K562 (cell line): ENCODE measurements at regions of chr1 and their contacts with region 1.

Region 1: DNA sequence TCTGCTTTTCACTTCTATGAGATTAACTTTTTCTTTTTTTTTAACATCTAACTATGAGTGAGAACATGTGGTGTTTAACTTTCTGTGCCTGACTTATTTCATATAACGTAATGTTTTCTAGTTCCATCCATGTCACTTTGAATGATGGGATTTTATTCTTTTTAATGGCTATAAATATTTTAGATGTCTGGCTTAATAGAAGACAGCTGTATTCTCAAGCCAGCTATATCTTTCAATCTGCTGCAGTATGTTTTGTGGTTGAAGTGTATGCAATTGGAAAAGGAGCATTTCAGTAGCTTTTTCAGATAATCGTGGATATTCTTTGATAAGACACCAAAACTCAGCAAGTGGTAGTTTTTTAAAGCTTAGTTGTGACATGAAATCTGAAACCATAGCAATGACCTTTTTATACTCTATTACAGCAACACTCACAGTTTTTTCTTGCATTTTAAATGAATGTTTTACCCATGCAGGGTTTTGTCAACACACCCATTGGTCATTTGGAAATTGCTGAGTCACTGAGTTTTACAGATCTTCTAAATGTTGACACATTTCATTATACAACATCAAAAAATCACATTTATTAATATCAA is 5.7 kb upstream of the SVBP start:
- DNase-seq: peak in 2 of 4 experiments; percentile 44 to 63
- ATAC-seq: no peak
- H3K4me3 ChIP-seq: no peak overlapping the region
- H3K27ac ChIP-seq: peak overlapping the region; percentile 73; the same call in 2 of the 3 replicates
- H3K4me1 ChIP-seq: peaks cover 18 to 58% of the 10 kb centered on the region in 2 experiments
- H3K27me3 ChIP-seq: no peaks in the 10 kb centered on the region
- CTCF ChIP-seq: no peak
- EP300 ChIP-seq: peak; percentile 39; the same call in 1 of the 2 replicates
- POLR2A ChIP-seq: no peak
- RAD21 ChIP-seq: no peak

Region 2: DNA sequence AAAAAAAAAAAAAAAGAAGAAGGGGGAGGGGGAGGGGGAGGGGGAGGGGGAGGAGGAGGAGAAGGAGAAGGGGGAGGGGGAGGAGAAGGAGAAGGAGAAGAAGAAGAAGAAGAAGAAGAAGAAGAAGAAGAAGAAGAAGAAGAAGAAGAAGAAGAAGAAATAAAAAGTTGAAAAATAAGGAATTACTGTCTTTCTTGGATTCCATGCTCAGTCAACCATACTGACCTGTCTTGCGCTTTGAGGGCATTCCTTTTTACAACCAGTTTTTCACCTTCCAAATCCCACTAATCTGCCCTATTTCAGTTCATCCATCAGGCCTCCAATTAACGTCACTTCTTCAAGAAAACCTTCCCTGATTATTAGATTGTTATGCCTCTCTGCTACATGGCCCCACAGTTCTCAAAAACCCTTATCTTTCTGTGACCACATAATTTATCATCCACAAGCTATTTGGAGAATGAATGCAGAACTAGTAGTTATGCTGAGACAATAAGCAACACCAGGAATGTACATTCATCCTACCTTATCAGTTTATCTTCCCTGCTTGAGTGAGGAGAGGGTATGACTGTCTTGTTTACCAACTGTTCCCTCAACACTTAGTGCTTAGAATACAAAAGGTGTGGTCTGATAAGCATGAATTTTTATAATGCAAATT is 600.8 kb before region 1 on chr1:
- CTCF ChIA-PET with region 1: no interaction called
- POLR2A ChIA-PET with region 1: no interaction called
- in situ Hi-C with region 1: no loop called
- intact Hi-C with region 1: no loop called
- DNase-seq: peak in 3 of 4 experiments; percentile 18 to 38 (median 23)
- ATAC-seq: no peak
- H3K4me3 ChIP-seq: no peak overlapping the region
- H3K27ac ChIP-seq: no peak overlapping the region
- H3K4me1 ChIP-seq: peaks cover 0 to 10% of the 10 kb centered on the region in 2 experiments; a peak in 2 of 5 replicates
- H3K27me3 ChIP-seq: no peaks in the 10 kb centered on the region
- CTCF ChIP-seq: no peak
- EP300 ChIP-seq: peak; percentile 33; the same call in 1 of the 2 replicates
- POLR2A ChIP-seq: no peak
- RAD21 ChIP-seq: no peak

Region 3: GRCh38 chr1:42753070-42753469 is 69.8 kb before region 1 on chr1:
- CTCF ChIA-PET with region 1: no interaction called
- POLR2A ChIA-PET with region 1: no interaction called
- in situ Hi-C with region 1: no loop called
- intact Hi-C with region 1: no loop called
- DNase-seq: no peak
- ATAC-seq: no peak
- H3K4me3 ChIP-seq: no peak overlapping the region
- H3K27ac ChIP-seq: no peak overlapping the region
- H3K4me1 ChIP-seq: peaks cover 0 to 4% of the 10 kb centered on the region in 2 experiments; a peak in 3 of 5 replicates
- H3K27me3 ChIP-seq: no peaks in the 10 kb centered on the region
- CTCF ChIP-seq: no peak
- EP300 ChIP-seq: no peak
- POLR2A ChIP-seq: no peak
- RAD21 ChIP-seq: no peak

Region 4: GRCh38 chr1:42766741-42767509 is 56.0 kb before region 1 on chr1 and contains the starts of genes C1orf50 and P3H1:
- CTCF ChIA-PET with region 1: no interaction called
- POLR2A ChIA-PET with region 1: interaction called, 9 read pairs
- in situ Hi-C with region 1: no loop called
- intact Hi-C with region 1: loop called (anchors 5 kb)
- DNase-seq: peak; percentile 96 to 100 (median 96)
- ATAC-seq: peak; percentile 93
- H3K4me3 ChIP-seq: peak within 1 kb of the TSS; percentile 76
- H3K27ac ChIP-seq: peak within 1 kb of the TSS; percentile 81
- H3K4me1 ChIP-seq: peaks cover 12 to 24% of the 10 kb centered on the region in 2 experiments; a peak in 3 of 5 replicates
- H3K27me3 ChIP-seq: no peaks in the 10 kb centered on the region
- CTCF ChIP-seq: peak in 1 of 3 experiments; percentile 10; a peak in 2 of 6 replicates
- EP300 ChIP-seq: no peak; the same call in 1 of the 2 replicates
- POLR2A ChIP-seq: peak; percentile 98
- RAD21 ChIP-seq: no peak
- polyA plus RNA-seq, gene C1orf50: 0.55 to 1.8 TPM
- polyA plus RNA-seq, gene P3H1: 1.7 to 5.0 TPM

Region 5: DNA sequence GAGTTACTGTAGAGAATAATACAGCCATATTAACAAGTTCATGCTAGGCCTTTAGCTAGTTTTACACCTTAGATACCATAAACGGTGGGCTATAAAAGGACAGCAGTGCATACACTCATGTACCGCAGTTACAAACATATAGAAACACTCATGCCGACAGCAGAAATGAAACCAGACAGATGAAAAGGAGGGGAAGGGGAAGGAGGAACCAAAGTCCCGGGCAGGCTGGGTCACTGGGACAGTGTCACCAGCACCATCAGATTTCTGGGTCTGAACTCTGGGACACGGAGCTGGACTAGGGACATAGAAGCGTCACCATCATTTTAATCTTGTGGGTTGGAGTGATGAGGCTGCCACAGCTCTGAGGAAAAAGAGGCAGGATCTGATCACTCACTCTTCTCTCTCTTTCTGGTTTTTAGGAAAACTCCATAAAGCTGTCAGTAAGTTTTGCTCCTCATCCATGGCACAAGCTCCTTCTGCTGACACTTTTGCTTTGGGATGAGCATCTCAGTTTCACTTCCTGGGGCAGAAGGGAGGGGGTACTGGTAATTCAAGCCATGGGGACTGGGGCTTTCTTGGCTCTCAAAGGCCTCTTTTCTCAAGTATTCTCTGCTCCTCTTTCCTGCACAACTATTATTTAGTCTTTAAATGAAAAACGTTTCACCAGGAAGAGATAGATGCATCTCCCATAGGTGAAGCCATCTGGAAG is 15.7 kb after region 1 on chr1:
- CTCF ChIA-PET with region 1: no interaction called
- POLR2A ChIA-PET with region 1: interaction called, 94 read pairs
- in situ Hi-C with region 1: no loop called
- intact Hi-C with region 1: no loop called
- DNase-seq: no peak
- ATAC-seq: no peak
- H3K4me3 ChIP-seq: no peak overlapping the region
- H3K27ac ChIP-seq: no peak overlapping the region
- H3K4me1 ChIP-seq: peaks cover 8 to 11% of the 10 kb centered on the region in 2 experiments; a peak in 3 of 5 replicates
- H3K27me3 ChIP-seq: no peaks in the 10 kb centered on the region
- CTCF ChIP-seq: no peak
- EP300 ChIP-seq: no peak
- POLR2A ChIP-seq: no peak
- RAD21 ChIP-seq: no peak